ENCODE measurements at regions of chr17 and their contacts with region 1.

Region 1: GRCh38 chr17:56887550-56888467 is 26.0 kb downstream of the TRIM25 start:
- DNase-seq: peak; percentile 57
- ATAC-seq: peak; percentile 60
- H3K4me3 ChIP-seq: no peak overlapping the region
- H3K27ac ChIP-seq: no peak overlapping the region
- H3K4me1 ChIP-seq: no peaks in the 10 kb centered on the region
- H3K27me3 ChIP-seq: no peaks in the 10 kb centered on the region
- CTCF ChIP-seq: no peak

Region 2: DNA sequence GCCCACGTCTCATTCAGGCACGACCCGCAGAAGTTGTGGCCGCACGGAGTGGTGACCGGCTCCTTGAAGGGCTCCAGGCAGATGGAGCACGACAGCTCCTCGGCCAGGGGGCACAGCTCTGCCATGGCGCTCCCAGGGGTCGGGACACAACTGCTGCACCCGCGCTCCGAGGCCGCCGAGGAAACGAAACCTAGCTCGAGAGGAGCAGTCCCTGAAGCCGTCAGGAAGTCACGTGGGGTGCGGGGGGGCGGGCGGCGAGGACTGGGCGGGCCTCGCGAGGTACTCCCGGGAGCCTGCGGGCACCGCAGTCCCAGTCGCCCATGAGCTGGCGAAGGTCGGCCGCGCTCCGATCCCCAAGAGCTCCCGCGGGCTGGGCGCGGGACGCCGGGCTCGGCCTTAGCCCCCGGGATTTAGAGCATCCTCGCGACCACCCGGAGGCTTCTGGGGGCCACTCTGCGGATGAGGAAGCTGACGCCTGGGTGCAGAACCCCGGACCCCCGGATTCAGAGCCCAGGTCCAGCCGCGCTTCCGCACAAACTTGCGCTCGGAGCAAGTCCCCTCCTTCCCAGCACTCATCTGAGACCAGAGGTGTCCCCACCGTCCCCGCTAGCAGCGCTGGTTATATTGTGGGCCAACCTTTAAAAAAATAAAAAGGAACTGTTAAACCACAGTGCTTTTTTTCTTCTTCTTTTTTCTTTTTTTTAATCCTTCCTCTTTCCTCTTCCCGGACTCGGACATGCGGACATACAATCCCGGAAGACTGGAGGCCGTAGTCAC is 26.2 kb after region 1 on chr17 and contains the start of gene TRIM25:
- CTCF ChIA-PET with region 1: no interaction called
- POLR2A ChIA-PET with region 1: interaction called, 10 read pairs
- intact Hi-C with region 1: no loop called
- DNase-seq: peak; percentile 92
- ATAC-seq: peak; percentile 67
- H3K4me3 ChIP-seq: peak within 1 kb of the TSS; percentile 87
- H3K27ac ChIP-seq: peak within 1 kb of the TSS; percentile 94
- H3K4me1 ChIP-seq: peaks cover 45% of the 10 kb centered on the region
- H3K27me3 ChIP-seq: no peaks in the 10 kb centered on the region
- CTCF ChIP-seq: no peak
- total RNA-seq, gene TRIM25: 44.0 and 60.2 TPM in 2 replicates

Region 3: DNA sequence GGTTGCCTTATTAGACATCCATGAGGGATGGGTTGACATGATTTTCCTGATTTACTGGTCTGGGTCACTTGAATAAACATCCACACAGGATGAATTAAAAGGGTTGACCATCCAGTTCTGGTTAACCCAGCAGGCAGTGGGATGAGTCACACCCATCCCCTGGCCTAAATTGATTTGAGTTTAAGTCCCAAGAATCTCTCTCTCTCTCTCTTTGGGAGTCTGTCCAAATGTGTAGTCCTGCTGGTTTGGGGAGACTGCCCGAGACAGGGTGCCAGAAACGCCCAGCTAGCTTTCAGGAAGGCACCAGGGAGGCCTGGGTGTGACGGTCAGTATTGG is 128.9 kb after region 1 on chr17:
- CTCF ChIA-PET with region 1: interaction called, 14 read pairs
- POLR2A ChIA-PET with region 1: no interaction called
- intact Hi-C with region 1: no loop called
- DNase-seq: peak; percentile 99
- ATAC-seq: peak; percentile 90
- H3K4me3 ChIP-seq: no peak overlapping the region
- H3K27ac ChIP-seq: peak overlapping the region; percentile 65
- H3K4me1 ChIP-seq: peaks cover 27% of the 10 kb centered on the region
- H3K27me3 ChIP-seq: no peaks in the 10 kb centered on the region
- CTCF ChIP-seq: no peak

Measured in PC-3 (cell line).